ENCODE measurements at regions of chrX and their contacts with region 1.

Region 1: DNA sequence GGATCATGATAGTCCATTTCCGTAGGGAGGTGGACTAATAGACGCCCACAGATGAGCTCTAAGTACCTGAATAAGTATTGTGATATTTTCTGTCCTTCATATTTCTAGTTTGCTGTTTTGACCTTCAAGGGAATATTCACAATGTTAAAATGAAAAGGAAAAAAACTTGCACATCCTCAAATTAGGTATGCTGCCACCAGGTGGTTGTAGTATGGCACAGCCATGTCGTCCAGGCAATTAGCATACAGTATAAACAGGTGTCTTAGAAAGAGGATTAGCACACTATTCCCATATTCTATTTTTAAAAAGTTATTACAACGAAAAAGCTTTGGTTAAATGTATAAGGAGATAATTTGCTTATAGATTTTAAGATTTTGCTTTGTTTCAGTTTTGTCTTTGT is 802.0 kb downstream of the RPA4 start:
- DNase-seq: peak; percentile 60
- H3K4me3 ChIP-seq: no peak overlapping the region
- H3K27ac ChIP-seq: no peak overlapping the region
- H3K4me1 ChIP-seq: no peaks in the 10 kb centered on the region
- H3K27me3 ChIP-seq: no peaks in the 10 kb centered on the region

Region 2: DNA sequence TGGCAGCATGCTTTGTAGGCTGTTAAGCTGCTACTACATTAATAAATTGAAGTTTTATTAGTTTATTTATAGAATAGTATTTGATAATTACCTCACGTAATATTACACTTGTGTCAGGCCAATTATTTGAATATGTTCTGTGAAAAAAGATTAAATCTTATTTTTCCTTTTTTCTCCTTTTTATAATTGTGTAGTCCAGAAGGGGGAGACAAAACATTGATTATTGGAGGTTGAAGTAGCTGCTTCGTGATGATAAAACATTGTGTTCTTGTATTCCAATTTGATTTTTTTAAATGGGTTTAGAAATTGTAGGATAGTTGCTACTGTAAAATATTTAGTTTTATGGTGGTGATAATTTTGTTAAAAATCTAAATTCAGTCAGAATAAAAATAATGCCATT is 915.4 kb before region 1 on chrX:
- in situ Hi-C with region 1: loop called (anchors 25 kb)
- DNase-seq: peak; percentile 45
- H3K4me3 ChIP-seq: no peak overlapping the region
- H3K27ac ChIP-seq: no peak overlapping the region
- H3K4me1 ChIP-seq: no peaks in the 10 kb centered on the region
- H3K27me3 ChIP-seq: no peaks in the 10 kb centered on the region

Region 3: GRCh38 chrX:97284531-97284930 is 401.2 kb before region 1 on chrX:
- in situ Hi-C with region 1: no loop called
- DNase-seq: no peak
- H3K4me3 ChIP-seq: no peak overlapping the region
- H3K27ac ChIP-seq: no peak overlapping the region
- H3K4me1 ChIP-seq: no peaks in the 10 kb centered on the region
- H3K27me3 ChIP-seq: no peaks in the 10 kb centered on the region

Measured in GM23248 (cell line).